Vagina (tissue), 2 donors: ENCODE measurements at regions of chr18 and their contacts with region 1.

Region 1: GRCh38 chr18:75273817-75274216 is 63.2 kb downstream of the TSHZ1 start:
- DNase-seq: no peak
- H3K4me3 ChIP-seq: no peak overlapping the region
- H3K27ac ChIP-seq: no peak overlapping the region
- H3K4me1 ChIP-seq: peaks cover 15% of the 10 kb centered on the region
- H3K27me3 ChIP-seq: no peaks in the 10 kb centered on the region
- CTCF ChIP-seq: no peak
- POLR2A ChIP-seq: no peak

Region 2: GRCh38 chr18:75244351-75245313 is 29.2 kb before region 1 on chr18:
- intact Hi-C with region 1: loop called (anchors 1 kb)
- DNase-seq: no peak
- H3K4me3 ChIP-seq: no peak overlapping the region
- H3K27ac ChIP-seq: no peak overlapping the region
- H3K4me1 ChIP-seq: peaks cover 59% of the 10 kb centered on the region
- H3K27me3 ChIP-seq: no peaks in the 10 kb centered on the region
- CTCF ChIP-seq: no peak
- POLR2A ChIP-seq: no peak